ENCODE measurements at regions of chr11 and their contacts with region 1.

Region 1: GRCh38 chr11:13384908-13385640 is 77.9 kb downstream of the BTBD10 start:
- H3K4me3 ChIP-seq: no peak overlapping the region
- H3K27ac ChIP-seq: no peak overlapping the region
- H3K4me1 ChIP-seq: no peaks in the 10 kb centered on the region
- CTCF ChIP-seq: no peak

Region 2: DNA sequence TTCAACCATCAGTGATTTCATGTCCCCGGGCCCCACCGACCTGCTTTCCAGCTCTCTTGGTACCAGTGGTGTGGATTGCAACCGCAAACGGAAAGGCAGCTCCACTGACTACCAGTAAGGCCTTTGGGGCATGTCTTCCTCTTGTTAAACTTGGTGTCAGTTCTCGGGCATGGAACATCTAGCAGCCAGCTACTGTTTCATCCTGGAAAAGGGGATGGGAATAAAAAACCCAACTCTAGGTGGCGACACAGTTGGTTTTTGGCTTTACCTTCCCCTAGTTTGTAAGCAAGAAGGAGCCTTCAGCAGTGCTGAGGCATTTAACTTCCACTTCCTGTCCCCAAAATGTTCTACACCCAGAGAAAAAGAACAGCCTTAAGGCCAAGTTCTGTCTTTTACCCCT is 30.7 kb before region 1 on chr11:
- CTCF ChIA-PET with region 1: interaction called, 12 read pairs
- POLR2A ChIA-PET with region 1: no interaction called
- H3K4me3 ChIP-seq: no peak overlapping the region
- H3K27ac ChIP-seq: no peak overlapping the region
- H3K4me1 ChIP-seq: no peaks in the 10 kb centered on the region
- CTCF ChIP-seq: no peak

Region 3: DNA sequence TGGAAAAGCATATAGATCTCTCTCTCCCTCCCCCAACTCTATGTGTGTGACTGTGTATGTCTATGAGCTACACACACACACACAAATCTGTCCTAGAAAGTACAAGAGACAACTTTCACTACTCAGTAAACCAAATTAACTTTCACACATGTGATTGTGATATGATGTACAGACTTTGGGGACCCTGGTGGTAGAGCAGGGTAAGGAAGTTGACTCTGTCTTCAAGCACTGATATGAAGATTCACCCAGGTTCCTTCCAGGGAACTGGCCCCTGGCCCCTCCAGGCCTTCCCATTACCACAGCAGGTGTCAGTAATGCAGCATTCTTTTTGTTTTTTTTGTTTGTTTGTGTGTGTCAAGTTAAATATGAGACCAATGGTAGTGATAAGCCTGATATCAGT is 176.8 kb after region 1 on chr11:
- CTCF ChIA-PET with region 1: no interaction called
- POLR2A ChIA-PET with region 1: no interaction called
- H3K4me3 ChIP-seq: no peak overlapping the region
- H3K27ac ChIP-seq: no peak overlapping the region
- H3K4me1 ChIP-seq: no peaks in the 10 kb centered on the region
- CTCF ChIP-seq: no peak

Measured in HEK293 (cell line).